Activated CD4-positive, alpha-beta T cell treated with anti-CD3 and anti-CD28 coated beads for 36 hours (primary cell): ENCODE measurements at regions of chr1 and their contacts with region 1.

Region 1: DNA sequence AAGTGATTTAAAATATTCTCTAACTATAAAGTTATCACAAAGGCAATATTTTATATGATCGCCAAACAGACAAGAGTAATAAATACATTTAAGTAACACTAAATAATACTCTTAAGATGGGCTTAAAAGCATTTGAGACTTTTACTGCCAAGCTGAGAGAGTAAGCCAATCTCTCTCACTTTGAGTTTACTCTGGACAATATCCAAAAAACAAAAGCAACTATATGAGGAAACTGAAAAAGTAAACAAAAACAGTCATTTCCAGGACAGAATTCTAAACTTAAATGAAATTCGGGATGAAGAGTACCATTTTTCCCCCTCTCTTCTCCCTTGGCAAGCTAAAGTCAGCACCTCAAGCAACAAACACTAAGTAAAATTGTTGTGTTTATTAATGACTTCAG is 173.2 kb downstream of the COP1 start:
- DNase-seq: no peak
- ATAC-seq: no peak
- H3K4me3 Mint-ChIP-seq: no peak overlapping the region
- H3K27ac Mint-ChIP-seq: no peak overlapping the region
- H3K4me1 Mint-ChIP-seq: peaks cover 1% of the 10 kb centered on the region
- H3K27me3 Mint-ChIP-seq: no peaks in the 10 kb centered on the region

Region 2: GRCh38 chr1:175984813-175985212 is 49.1 kb before region 1 on chr1:
- CTCF ChIA-PET with region 1: no interaction called
- POLR2A ChIA-PET with region 1: no interaction called
- intact Hi-C with region 1: loop called in 1 of 2 experiments (anchors 5 kb)
- DNase-seq: no peak
- ATAC-seq: no peak
- H3K4me3 Mint-ChIP-seq: no peak overlapping the region
- H3K27ac Mint-ChIP-seq: no peak overlapping the region
- H3K4me1 Mint-ChIP-seq: no peaks in the 10 kb centered on the region
- H3K27me3 Mint-ChIP-seq: no peaks in the 10 kb centered on the region